Psoas muscle (tissue), 8 donors: ENCODE measurements at regions of chr5 and their contacts with region 1.

Region 1: GRCh38 chr5:178732281-178732680 is 1.8 kb upstream of the ZNF354A start:
- DNase-seq: no peak
- ATAC-seq: no peak
- H3K4me3 ChIP-seq: no peak overlapping the region
- H3K27ac ChIP-seq: no peak overlapping the region
- H3K4me1 ChIP-seq: no peaks in the 10 kb centered on the region
- H3K27me3 ChIP-seq: no peaks in the 10 kb centered on the region
- CTCF ChIP-seq: no peak

Region 2: DNA sequence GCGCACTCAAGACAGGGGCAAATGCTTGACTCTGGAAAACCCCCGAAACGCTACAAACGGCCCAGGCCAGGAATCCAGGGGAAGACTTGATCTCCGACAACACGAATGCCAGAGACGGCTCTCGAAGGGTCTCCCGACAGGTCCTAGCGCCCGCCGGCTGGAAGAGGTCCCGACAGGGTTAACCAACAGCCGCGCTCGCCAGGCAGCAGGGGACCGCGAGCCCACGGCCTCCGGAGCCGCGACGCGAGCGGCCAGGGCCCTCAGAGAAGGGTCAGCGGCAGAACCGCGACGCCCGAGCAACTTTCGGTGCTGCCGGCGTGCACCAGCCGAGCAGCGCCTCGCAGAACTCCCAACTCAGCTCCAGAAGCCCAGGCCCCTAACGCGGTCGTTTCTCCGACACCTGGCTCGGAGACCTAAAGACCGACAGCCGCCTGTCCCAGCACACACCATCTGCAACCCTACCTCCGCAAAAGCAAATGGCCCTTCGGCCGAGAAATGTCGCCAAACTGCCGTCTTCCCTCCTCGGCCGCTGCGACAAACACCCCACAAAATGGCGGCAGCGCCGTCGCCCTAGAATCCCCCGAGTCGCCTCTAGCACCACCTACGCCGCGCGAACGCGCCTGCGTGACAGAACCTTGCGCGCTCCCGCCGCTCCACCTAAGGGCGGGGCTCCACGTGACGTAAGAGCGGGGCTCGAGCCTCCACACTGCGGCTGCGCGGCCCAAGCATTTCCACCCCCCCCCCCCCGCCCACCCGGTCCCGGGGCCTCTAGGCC is 105.6 kb before region 1 on chr5 and contains the start of gene CLK4:
- intact Hi-C with region 1: loop called in 1 of 2 experiments (anchors 2 kb)
- DNase-seq: peak; percentile 96 to 99
- ATAC-seq: peak; percentile 94 to 97 (median 95)
- H3K4me3 ChIP-seq: peak within 1 kb of the TSS; percentile 85
- H3K27ac ChIP-seq: peak within 1 kb of the TSS; percentile 97
- H3K4me1 ChIP-seq: peaks cover 32% of the 10 kb centered on the region
- H3K27me3 ChIP-seq: no peaks in the 10 kb centered on the region
- CTCF ChIP-seq: no peak
- total RNA-seq, gene CLK4: 15.1 to 31.5 (median 17.8) TPM

Region 3: GRCh38 chr5:178849316-178849715 is 117.0 kb after region 1 on chr5:
- intact Hi-C with region 1: no loop called
- DNase-seq: no peak
- ATAC-seq: no peak
- H3K4me3 ChIP-seq: no peak overlapping the region
- H3K27ac ChIP-seq: no peak overlapping the region
- H3K4me1 ChIP-seq: no peaks in the 10 kb centered on the region
- H3K27me3 ChIP-seq: no peaks in the 10 kb centered on the region
- CTCF ChIP-seq: no peak

Region 4: GRCh38 chr5:178859625-178860531 is 127.6 kb after region 1 on chr5 and contains the start of gene ZNF354B:
- intact Hi-C with region 1: loop called (anchors 1 to 2 kb)
- DNase-seq: peak; percentile 90 to 93
- ATAC-seq: peak; percentile 97 to 100 (median 100)
- H3K4me3 ChIP-seq: peak within 1 kb of the TSS; percentile 96
- H3K27ac ChIP-seq: peak within 1 kb of the TSS; percentile 91
- H3K4me1 ChIP-seq: peaks cover 6% of the 10 kb centered on the region
- H3K27me3 ChIP-seq: no peaks in the 10 kb centered on the region
- CTCF ChIP-seq: peak; percentile 11
- total RNA-seq, gene ZNF354B: 5.5 to 7.2 (median 6.1) TPM

Region 5: DNA sequence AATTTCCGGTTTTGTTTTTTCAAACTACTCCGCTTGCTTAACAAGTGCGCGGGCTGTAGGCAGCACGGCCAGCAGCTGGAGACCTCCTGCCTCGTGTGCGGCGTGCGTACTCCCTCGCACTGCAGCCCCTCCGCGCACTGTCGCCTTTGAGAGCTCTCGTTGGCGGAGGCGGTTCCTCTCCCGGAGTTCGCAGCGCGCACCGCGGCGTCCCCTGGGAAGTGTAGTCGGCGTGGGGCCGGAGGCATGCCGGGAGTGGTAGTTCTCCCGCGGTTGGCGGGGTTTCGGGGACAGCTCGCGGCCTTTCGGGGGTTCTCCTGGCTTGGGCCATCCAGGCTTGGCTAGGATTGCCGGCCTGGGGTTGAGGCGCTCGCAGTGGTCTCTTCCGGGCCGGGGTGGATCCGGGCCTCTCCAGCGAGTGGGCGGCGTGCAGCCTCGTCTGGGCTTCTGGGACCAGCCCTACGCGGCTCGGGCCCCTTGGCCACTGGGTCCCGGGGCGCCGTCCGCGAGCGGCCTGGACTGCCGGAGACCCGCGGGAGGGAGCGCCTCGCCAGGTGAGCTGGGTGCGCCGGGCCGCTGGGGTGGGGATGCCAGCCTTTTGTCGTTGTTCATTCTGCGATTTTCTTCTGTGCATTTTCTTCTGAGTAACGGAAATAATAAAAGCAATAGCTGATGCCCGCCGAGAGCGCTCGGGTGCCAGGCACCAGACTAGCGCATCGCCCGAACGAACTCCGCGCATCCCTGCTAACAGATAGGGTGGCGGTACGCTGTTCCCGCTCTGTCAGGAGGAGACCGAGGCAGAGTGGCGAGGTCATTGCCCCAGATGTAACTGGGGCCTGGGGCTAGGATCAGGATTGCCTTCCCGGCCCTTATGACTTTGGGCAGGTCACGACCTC is 328.1 kb after region 1 on chr5 and contains the start of gene ZNF354C:
- intact Hi-C with region 1: loop called (anchors 5 kb)
- DNase-seq: peak; percentile 92 to 94
- ATAC-seq: peak; percentile 97 to 100 (median 100)
- H3K4me3 ChIP-seq: peak within 1 kb of the TSS; percentile 82
- H3K27ac ChIP-seq: peak within 1 kb of the TSS; percentile 79
- H3K4me1 ChIP-seq: peaks cover 10% of the 10 kb centered on the region
- H3K27me3 ChIP-seq: no peaks in the 10 kb centered on the region
- CTCF ChIP-seq: no peak
- total RNA-seq, gene ZNF354C: 2.2 to 3.7 (median 2.7) TPM